PC-3 (cell line): ENCODE measurements at regions of chr10 and their contacts with region 1.

Region 1: GRCh38 chr10:74640134-74640931 is 186.1 kb upstream of the KAT6B start:
- DNase-seq: peak; percentile 48
- ATAC-seq: no peak
- H3K4me3 ChIP-seq: no peak overlapping the region
- H3K27ac ChIP-seq: no peak overlapping the region
- H3K4me1 ChIP-seq: peaks cover 52% of the 10 kb centered on the region
- H3K27me3 ChIP-seq: no peaks in the 10 kb centered on the region
- CTCF ChIP-seq: no peak

Region 2: DNA sequence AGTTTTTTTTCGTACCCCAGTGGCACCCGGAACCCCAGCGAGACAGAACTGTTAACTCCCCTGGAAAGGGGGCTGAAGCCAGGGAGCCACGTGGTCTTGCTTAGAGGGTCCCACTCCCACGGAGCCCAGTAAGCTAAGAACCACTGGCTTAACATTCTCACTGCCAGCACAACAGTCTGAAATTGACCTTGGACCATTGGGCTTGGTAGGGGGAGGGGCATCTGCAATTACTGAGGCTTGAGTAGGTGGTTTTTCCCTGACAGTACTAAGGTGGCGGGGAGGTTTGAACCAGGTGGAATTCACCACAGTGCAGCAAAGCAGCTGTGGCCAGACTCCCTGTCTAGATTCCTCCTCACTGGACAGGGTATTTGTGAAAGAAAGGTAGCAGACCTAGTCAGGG is 292.8 kb before region 1 on chr10:
- CTCF ChIA-PET with region 1: no interaction called
- POLR2A ChIA-PET with region 1: no interaction called
- intact Hi-C with region 1: no loop called
- DNase-seq: no peak
- ATAC-seq: no peak
- H3K4me3 ChIP-seq: no peak overlapping the region
- H3K27ac ChIP-seq: no peak overlapping the region
- H3K4me1 ChIP-seq: no peaks in the 10 kb centered on the region
- H3K27me3 ChIP-seq: no peaks in the 10 kb centered on the region
- CTCF ChIP-seq: no peak

Region 3: DNA sequence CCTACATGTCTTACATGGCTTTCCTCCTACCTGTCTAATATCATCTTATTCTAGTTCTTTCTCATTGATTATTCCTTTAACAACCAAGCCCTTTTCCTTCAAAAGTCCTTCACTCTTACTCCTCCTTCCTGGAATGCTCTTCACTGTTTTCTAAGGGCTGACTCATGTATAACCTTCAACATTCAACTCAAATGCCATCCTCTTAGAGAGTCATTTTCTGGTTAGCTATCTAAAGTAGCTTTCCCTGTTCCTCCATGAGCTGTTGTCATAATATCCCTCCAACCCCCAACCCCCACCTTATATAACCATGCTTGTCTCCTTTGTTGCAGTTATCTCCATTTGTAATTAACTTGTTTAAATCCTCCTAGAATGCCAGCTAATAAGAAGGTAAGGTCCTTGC is 202.5 kb before region 1 on chr10:
- CTCF ChIA-PET with region 1: no interaction called
- POLR2A ChIA-PET with region 1: no interaction called
- intact Hi-C with region 1: no loop called
- DNase-seq: peak; percentile 77
- ATAC-seq: peak; percentile 68
- H3K4me3 ChIP-seq: no peak overlapping the region
- H3K27ac ChIP-seq: no peak overlapping the region
- H3K4me1 ChIP-seq: peaks cover 22% of the 10 kb centered on the region
- H3K27me3 ChIP-seq: no peaks in the 10 kb centered on the region
- CTCF ChIP-seq: no peak

Region 4: DNA sequence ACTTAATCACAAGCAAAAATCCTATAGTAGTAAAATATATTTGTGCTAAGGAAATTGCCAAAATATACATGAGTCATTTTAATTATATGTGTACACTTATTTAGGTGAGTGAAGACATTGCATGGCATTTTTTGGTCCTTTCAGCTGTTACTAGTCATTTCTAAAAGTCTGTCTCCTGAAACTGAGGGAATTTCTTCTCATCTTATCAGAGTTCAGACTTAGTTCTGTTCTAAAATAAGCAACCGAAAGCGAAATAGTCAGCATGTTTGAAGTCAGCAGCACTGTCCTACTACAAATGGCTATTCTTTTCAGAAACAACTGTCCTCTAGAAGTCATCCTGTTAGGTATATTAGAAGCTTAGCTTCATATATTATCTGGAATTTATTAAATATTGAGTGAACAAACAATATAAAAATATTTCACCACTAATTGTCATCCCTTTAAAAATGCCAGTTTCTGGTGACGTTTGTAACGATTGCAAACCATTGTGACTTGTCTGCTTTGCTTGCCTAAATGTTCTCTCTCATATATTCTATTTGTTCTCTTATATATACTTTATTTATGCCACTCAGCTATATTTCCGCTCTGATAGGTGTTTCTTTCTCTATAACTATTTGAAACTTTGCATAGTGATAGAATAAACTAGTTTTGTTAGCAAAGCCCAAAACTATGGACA is 41.3 kb before region 1 on chr10:
- CTCF ChIA-PET with region 1: no interaction called
- POLR2A ChIA-PET with region 1: interaction called, 14 read pairs
- intact Hi-C with region 1: loop called (anchors 2 kb)
- DNase-seq: peak; percentile 74
- ATAC-seq: peak; percentile 89
- H3K4me3 ChIP-seq: no peak overlapping the region
- H3K27ac ChIP-seq: no peak overlapping the region
- H3K4me1 ChIP-seq: peaks cover 12% of the 10 kb centered on the region
- H3K27me3 ChIP-seq: no peaks in the 10 kb centered on the region
- CTCF ChIP-seq: no peak

Region 5: GRCh38 chr10:74704629-74705357 is 64.5 kb after region 1 on chr10:
- CTCF ChIA-PET with region 1: no interaction called
- POLR2A ChIA-PET with region 1: interaction called, 4 read pairs
- intact Hi-C with region 1: loop called (anchors 2 kb)
- DNase-seq: peak; percentile 95
- ATAC-seq: peak; percentile 95
- H3K4me3 ChIP-seq: no peak overlapping the region
- H3K27ac ChIP-seq: peak overlapping the region; percentile 28
- H3K4me1 ChIP-seq: peaks cover 15% of the 10 kb centered on the region
- H3K27me3 ChIP-seq: no peaks in the 10 kb centered on the region
- CTCF ChIP-seq: no peak

Region 6: DNA sequence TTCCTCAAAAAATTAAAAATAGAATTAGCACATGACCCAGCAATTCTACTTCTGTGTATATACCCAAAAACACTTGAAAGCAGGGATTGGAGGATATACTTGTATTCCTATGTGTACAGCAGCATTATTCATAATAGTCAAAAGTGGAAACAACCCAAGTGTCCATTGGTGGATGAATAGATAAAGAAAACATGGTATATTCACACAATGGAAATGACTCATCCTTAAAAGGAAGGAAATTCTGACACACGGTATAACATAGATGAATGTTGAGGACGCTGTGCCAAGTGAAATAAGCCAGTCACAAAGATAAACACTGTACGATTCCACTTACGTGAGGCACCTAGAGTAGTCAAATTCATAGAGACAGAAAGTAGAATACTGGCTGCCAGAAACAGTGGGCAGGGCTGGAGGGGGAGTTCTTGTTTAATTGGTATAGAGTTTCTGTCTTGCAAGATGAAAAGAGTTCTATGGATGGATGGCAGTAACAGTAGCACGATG is 159.4 kb after region 1 on chr10:
- CTCF ChIA-PET with region 1: no interaction called
- POLR2A ChIA-PET with region 1: no interaction called
- intact Hi-C with region 1: loop called (anchors 5 kb)
- DNase-seq: peak; percentile 100
- ATAC-seq: peak; percentile 97
- H3K4me3 ChIP-seq: peak overlapping the region; percentile 3; the same call in 1 of the 2 replicates
- H3K27ac ChIP-seq: peak overlapping the region; percentile 67
- H3K4me1 ChIP-seq: peaks cover 8% of the 10 kb centered on the region
- H3K27me3 ChIP-seq: no peaks in the 10 kb centered on the region
- CTCF ChIP-seq: no peak